GM12878 (cell line): ENCODE measurements at regions of chr14 and their contacts with region 1.

Region 1: DNA sequence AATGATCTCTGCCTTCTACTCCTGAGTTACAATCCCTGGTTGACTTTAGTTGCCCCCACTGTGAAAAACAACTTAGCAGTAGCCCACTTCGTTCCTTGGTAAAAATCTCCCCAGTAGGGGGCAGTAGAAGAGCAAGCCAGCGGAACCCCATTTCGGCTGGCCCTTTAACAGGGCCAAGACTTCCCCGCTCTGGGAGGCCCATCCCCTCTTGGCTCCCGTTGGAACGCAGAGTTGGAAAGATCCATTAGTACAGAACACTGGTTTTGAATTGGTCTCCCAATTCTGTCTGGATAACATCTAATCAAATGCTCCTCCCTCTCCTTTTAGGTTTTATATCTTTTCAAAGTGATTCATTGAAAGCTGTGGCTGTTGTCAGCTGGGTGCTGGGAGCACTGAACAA is 1133.3 kb downstream of the BCL11B start:
- DNase-seq: no peak
- ATAC-seq: peak; percentile 72
- H3K4me3 ChIP-seq: no peak overlapping the region
- H3K27ac ChIP-seq: no peak overlapping the region
- H3K4me1 ChIP-seq: no peaks in the 10 kb centered on the region; the same call in 1 of the 2 replicates
- H3K27me3 ChIP-seq: no peaks in the 10 kb centered on the region
- CTCF ChIP-seq: peak; percentile 35 to 51 (median 49)
- EP300 ChIP-seq: no peak
- POLR2A ChIP-seq: no peak
- RAD21 ChIP-seq: peak; percentile 88

Region 2: GRCh38 chr14:97707603-97708002 is 431.1 kb before region 1 on chr14:
- CTCF ChIA-PET with region 1: interaction called, 10 read pairs
- POLR2A ChIA-PET with region 1: no interaction called
- RAD21 ChIA-PET with region 1: interaction called, 4 read pairs
- SMC1A ChIA-PET with region 1: no interaction called
- in situ Hi-C with region 1: no loop called
- intact Hi-C with region 1: no loop called
- DNase-seq: peak; percentile 40
- ATAC-seq: peak; percentile 77
- H3K4me3 ChIP-seq: no peak overlapping the region
- H3K27ac ChIP-seq: no peak overlapping the region
- H3K4me1 ChIP-seq: peaks cover 7% of the 10 kb centered on the region
- H3K27me3 ChIP-seq: no peaks in the 10 kb centered on the region
- CTCF ChIP-seq: peak; percentile 2 to 17 (median 9); a peak in 1 of 6 replicates
- EP300 ChIP-seq: 0 out of 4 replicates have a peak, but pooled peaks of 1 of the 2 experiments have one; percentile 45
- POLR2A ChIP-seq: no peak
- RAD21 ChIP-seq: peak; percentile 55

Region 3: GRCh38 chr14:98173305-98173704 is 34.6 kb after region 1 on chr14:
- CTCF ChIA-PET with region 1: interaction called, 45 read pairs
- POLR2A ChIA-PET with region 1: interaction called, 5 read pairs
- RAD21 ChIA-PET with region 1: interaction called, 91 read pairs
- SMC1A ChIA-PET with region 1: interaction called, 461 read pairs
- in situ Hi-C with region 1: no loop called
- intact Hi-C with region 1: no loop called
- DNase-seq: no peak
- ATAC-seq: no peak; the same call in 2 of the 3 replicates
- H3K4me3 ChIP-seq: no peak overlapping the region
- H3K27ac ChIP-seq: no peak overlapping the region
- H3K4me1 ChIP-seq: peaks cover 5% of the 10 kb centered on the region
- H3K27me3 ChIP-seq: no peaks in the 10 kb centered on the region
- CTCF ChIP-seq: no peak
- EP300 ChIP-seq: no peak
- POLR2A ChIP-seq: no peak
- RAD21 ChIP-seq: no peak

Region 4: GRCh38 chr14:98198385-98198784 is 59.7 kb after region 1 on chr14:
- CTCF ChIA-PET with region 1: interaction called, 158 read pairs
- POLR2A ChIA-PET with region 1: interaction called, 16 read pairs
- RAD21 ChIA-PET with region 1: interaction called, 407 read pairs
- SMC1A ChIA-PET with region 1: interaction called, 461 read pairs
- in situ Hi-C with region 1: no loop called
- intact Hi-C with region 1: no loop called
- DNase-seq: no peak
- ATAC-seq: peak; percentile 86
- H3K4me3 ChIP-seq: no peak overlapping the region
- H3K27ac ChIP-seq: no peak overlapping the region; the same call in none of the 2 replicates
- H3K4me1 ChIP-seq: no peaks in the 10 kb centered on the region; the same call in 1 of the 2 replicates
- H3K27me3 ChIP-seq: no peaks in the 10 kb centered on the region
- CTCF ChIP-seq: no peak
- EP300 ChIP-seq: peak; percentile 35 to 80; a peak in 2 of 4 replicates
- POLR2A ChIP-seq: no peak
- RAD21 ChIP-seq: no peak

Region 5: DNA sequence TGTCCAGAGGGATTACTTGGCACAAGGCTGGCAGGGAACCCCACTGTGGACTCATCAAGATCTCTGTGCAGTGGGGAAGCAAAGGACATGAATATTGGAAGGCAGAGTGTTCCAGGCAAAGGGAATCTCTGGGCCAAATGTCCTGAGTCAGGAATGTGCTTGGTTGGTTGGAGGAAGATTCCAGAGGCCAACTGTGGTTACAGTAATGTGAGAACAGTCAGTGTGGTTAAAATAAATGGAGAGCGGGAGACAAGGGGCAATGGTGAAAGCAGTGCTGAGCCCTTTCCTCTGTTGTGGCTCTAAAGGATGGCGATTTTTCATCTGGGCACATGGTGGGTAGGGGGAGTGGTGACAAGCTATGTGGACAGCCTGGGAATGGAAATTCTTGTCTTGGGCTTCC is 185.2 kb after region 1 on chr14:
- CTCF ChIA-PET with region 1: interaction called, 4 read pairs
- POLR2A ChIA-PET with region 1: no interaction called
- RAD21 ChIA-PET with region 1: interaction called, 5 read pairs
- SMC1A ChIA-PET with region 1: interaction called, 15 read pairs
- in situ Hi-C with region 1: no loop called
- intact Hi-C with region 1: no loop called
- DNase-seq: no peak
- ATAC-seq: no peak
- H3K4me3 ChIP-seq: no peak overlapping the region
- H3K27ac ChIP-seq: no peak overlapping the region
- H3K4me1 ChIP-seq: no peaks in the 10 kb centered on the region
- H3K27me3 ChIP-seq: no peaks in the 10 kb centered on the region
- CTCF ChIP-seq: no peak
- EP300 ChIP-seq: no peak
- POLR2A ChIP-seq: no peak
- RAD21 ChIP-seq: no peak

Region 6: GRCh38 chr14:99266181-99267178 is 1127.8 kb after region 1 on chr14:
- CTCF ChIA-PET with region 1: interaction called, 83 read pairs
- POLR2A ChIA-PET with region 1: interaction called, 8 read pairs
- RAD21 ChIA-PET with region 1: interaction called, 91 read pairs
- SMC1A ChIA-PET with region 1: interaction called, 63 read pairs
- in situ Hi-C with region 1: loop called (anchors 25 kb)
- intact Hi-C with region 1: loop called (anchors 2 kb)
- DNase-seq: no peak
- ATAC-seq: peak; percentile 82
- H3K4me3 ChIP-seq: no peak overlapping the region
- H3K27ac ChIP-seq: no peak overlapping the region
- H3K4me1 ChIP-seq: no peaks in the 10 kb centered on the region
- H3K27me3 ChIP-seq: peaks cover 11 to 13% of the 10 kb centered on the region in 2 experiments
- CTCF ChIP-seq: peak; percentile 98 to 99 (median 98); a peak in 5 of 6 replicates
- EP300 ChIP-seq: no peak
- POLR2A ChIP-seq: no peak
- RAD21 ChIP-seq: peak; percentile 97